BJ (cell line): ENCODE measurements at regions of chr1 and their contacts with region 1.

Region 1: GRCh38 chr1:155961937-155962336 is 16.4 kb downstream of the ARHGEF2 start:
- DNase-seq: peak; percentile 74
- H3K4me3 ChIP-seq: no peak overlapping the region
- H3K27me3 ChIP-seq: no peaks in the 10 kb centered on the region
- CTCF ChIP-seq: peak; percentile 47

Region 2: DNA sequence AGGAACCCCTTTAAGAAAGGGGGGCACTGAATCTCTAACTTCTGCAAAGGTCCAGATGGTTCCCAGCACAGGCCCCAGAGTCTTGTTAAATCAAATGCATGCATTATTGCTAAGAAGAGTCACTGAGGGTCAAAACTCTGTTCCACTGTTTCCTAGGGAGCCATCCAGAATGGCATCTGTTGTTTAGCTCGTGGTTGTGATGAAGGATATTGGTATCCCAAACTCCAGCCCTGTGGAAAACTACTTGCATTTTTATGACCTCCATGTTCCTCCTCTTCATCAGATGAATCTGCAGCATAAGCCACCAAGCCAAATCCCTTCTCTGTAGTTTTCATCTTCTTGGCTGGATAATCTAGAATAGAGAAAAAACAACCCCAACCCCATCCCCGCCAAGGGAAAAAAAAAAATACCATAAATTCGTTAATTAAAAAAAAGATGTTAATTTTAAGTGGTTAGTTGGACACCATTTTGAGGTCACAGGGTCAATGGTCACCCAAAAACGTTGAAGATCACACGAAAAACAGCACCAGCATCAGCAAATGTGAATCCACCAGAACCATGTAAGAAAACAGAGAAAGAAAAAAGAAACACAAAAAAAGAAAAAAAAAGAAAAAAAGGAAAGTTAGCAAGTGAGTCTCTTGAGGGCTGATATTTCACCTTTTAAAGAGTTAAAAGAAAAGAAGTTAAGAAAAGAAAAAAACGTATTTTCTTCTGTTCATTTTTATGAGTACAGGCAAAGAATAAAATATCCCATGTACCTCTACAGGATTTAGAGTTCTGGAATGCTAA is 47.8 kb before region 1 on chr1:
- CTCF ChIA-PET with region 1: no interaction called
- POLR2A ChIA-PET with region 1: no interaction called
- DNase-seq: no peak
- H3K4me3 ChIP-seq: no peak overlapping the region
- H3K27me3 ChIP-seq: no peaks in the 10 kb centered on the region
- CTCF ChIP-seq: no peak

Region 3: GRCh38 chr1:155978325-155978972 is 16.5 kb after region 1 on chr1 and contains the start of gene ARHGEF2:
- CTCF ChIA-PET with region 1: interaction called, 10 read pairs
- POLR2A ChIA-PET with region 1: no interaction called
- DNase-seq: no peak
- H3K4me3 ChIP-seq: peak within 1 kb of the TSS; percentile 80
- H3K27me3 ChIP-seq: no peaks in the 10 kb centered on the region
- CTCF ChIP-seq: peak; percentile 40
- polyA plus RNA-seq, gene ARHGEF2: 130 and 213 TPM in 2 replicates

Region 4: DNA sequence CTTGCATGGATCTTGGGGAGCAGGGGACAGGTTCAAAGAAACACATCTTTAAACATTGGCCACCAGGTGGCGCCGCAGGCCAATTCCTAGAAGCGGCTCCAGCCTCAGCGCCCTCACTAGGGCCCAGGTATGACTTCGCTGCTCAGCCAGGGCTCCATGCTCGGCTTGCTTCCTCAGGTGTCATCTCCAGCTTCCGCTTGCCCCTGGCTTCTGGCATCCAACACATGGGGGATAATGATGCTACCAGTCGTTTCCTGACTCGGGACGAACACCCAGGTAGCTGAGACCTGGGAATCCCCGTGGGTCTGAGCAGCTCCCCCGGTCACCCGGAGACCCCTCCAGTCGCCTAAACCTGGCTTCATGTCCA is 128.9 kb after region 1 on chr1:
- CTCF ChIA-PET with region 1: no interaction called
- POLR2A ChIA-PET with region 1: no interaction called
- DNase-seq: no peak
- H3K4me3 ChIP-seq: no peak overlapping the region
- H3K27me3 ChIP-seq: no peaks in the 10 kb centered on the region
- CTCF ChIP-seq: peak; percentile 72

Region 5: GRCh38 chr1:156104065-156104810 is 142.3 kb after region 1 on chr1:
- CTCF ChIA-PET with region 1: no interaction called
- POLR2A ChIA-PET with region 1: interaction called, 12 read pairs
- DNase-seq: peak; percentile 71
- H3K4me3 ChIP-seq: no peak overlapping the region
- H3K27me3 ChIP-seq: no peaks in the 10 kb centered on the region
- CTCF ChIP-seq: no peak

Region 6: DNA sequence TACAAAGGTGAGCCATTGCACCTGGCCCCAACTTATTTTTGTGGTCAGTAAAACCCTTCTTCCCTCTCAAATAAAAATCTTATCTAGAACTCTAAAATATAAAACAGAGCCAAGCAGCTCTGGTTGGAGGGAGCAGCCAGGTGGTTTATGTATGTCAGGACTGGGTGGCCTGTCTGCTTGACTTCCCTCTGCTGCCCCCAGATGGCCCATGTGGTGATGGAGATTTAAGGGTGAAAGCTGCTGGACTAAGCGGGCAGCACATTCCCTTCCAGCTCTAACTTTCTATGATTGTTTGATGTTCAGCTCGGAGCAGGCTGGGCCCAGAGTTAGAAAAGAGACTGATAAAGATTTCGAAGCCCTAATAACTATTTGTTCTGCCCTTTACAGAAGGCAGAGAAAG is 297.9 kb after region 1 on chr1:
- CTCF ChIA-PET with region 1: no interaction called
- POLR2A ChIA-PET with region 1: no interaction called
- DNase-seq: no peak
- H3K4me3 ChIP-seq: no peak overlapping the region
- H3K27me3 ChIP-seq: no peaks in the 10 kb centered on the region
- CTCF ChIP-seq: no peak